ENCODE measurements at regions of chr16 and their contacts with region 1.

Region 1: GRCh38 chr16:10737068-10737625 is 6.5 kb upstream of the NUBP1 start:
- DNase-seq: peak in 2 of 3 donors; percentile 31 to 73
- ATAC-seq: peak; percentile 50 to 62
- H3K4me3 ChIP-seq: no peak overlapping the region
- H3K27ac ChIP-seq: peak overlapping the region; percentile 83
- H3K4me1 ChIP-seq: peaks cover 2% of the 10 kb centered on the region
- H3K27me3 ChIP-seq: no peaks in the 10 kb centered on the region

Region 2: GRCh38 chr16:10256784-10257641 is 480.1 kb before region 1 on chr16:
- intact Hi-C with region 1: loop called in 2 of 4 experiments (anchors 10 kb)
- DNase-seq: peak; percentile 26 to 62 (median 51)
- ATAC-seq: peak in 1 of 2 donors; percentile 77
- H3K4me3 ChIP-seq: no peak overlapping the region
- H3K27ac ChIP-seq: no peak overlapping the region
- H3K4me1 ChIP-seq: no peaks in the 10 kb centered on the region
- H3K27me3 ChIP-seq: no peaks in the 10 kb centered on the region

Region 3: DNA sequence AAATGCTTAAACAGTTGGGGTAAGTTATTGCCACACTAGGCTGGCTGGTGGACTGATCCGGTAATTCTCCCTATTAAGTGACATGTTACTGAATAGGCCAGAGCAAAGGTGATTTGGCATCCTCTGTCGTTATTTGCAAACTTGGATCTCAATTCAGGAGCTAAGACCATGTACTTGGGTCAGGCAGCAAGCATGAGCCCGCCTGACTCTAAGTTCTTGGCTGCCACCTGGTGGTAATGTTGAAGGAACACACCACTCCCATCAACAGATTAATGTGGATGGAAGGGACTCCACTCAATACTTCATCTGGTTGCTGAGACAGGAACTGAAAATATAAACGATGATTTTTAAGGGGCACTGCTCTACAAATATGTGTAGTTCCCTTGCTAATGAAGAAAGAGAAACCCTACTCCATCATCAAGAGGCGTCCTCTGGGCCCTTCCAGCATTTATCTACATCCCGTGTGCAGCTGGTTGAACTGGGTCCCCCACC is 227.6 kb before region 1 on chr16:
- intact Hi-C with region 1: loop called in 2 of 4 experiments (anchors 2 kb)
- DNase-seq: peak in 2 of 3 donors; percentile 28 to 58
- ATAC-seq: peak; percentile 89 to 90
- H3K4me3 ChIP-seq: no peak overlapping the region
- H3K27ac ChIP-seq: no peak overlapping the region
- H3K4me1 ChIP-seq: no peaks in the 10 kb centered on the region
- H3K27me3 ChIP-seq: no peaks in the 10 kb centered on the region

Region 4: GRCh38 chr16:10558746-10559641 is 178.2 kb before region 1 on chr16:
- intact Hi-C with region 1: no loop called
- DNase-seq: peak; percentile 87 to 93 (median 93)
- ATAC-seq: peak; percentile 88 to 89
- H3K4me3 ChIP-seq: peak overlapping the region; percentile 8
- H3K27ac ChIP-seq: peak overlapping the region; percentile 84
- H3K4me1 ChIP-seq: peaks cover 34% of the 10 kb centered on the region
- H3K27me3 ChIP-seq: no peaks in the 10 kb centered on the region

Region 5: DNA sequence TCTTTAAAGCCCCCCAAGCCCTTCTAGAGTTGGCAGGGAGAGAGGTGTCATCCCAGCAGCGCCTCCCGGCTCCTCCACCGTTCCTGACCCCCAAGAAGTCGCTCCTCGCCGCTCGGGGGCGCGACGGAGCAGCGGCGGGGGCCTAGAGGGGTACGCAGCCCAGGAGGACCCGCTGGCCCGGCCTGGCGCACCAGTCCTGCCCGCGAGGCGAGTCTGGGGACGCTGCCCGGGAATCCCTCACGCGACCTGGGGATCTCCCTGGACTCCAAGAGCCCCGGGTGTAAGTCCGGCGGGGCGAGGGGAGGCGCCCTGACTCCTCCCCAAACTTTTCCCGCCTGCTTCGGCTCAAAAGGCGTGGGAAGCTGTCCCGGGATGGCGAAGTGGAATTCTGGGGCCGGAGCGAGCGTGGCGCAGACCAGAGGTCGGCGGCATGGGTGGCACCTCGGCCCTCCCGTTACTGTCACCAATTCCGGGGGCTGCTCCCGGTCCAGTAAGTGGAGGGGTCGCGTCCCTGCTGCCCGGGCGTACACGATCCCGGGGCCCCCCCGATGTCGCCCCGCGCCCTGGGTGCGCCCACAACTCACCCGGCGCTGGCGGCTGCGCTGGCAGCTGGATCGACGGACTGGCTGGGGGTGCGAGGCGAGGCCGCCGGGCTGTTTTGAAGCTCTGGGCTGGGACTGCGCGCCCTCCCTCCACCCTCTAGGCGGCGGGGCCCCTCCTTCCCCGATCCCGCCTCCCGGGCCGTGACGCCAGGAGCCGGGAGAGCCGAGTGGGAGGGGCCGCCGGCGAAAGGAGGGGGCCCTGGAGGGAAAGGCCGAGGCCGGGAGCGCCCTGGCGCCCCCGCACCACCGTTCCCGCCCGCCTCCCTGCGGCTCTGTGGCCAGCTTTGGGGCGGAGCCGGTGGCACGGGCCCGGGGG is 156.9 kb before region 1 on chr16 and contains the start of gene EMP2:
- intact Hi-C with region 1: loop called in 2 of 4 experiments (anchors 5 kb)
- DNase-seq: peak; percentile 88 to 95 (median 94)
- ATAC-seq: peak; percentile 93 to 94
- H3K4me3 ChIP-seq: peak within 1 kb of the TSS; percentile 63
- H3K27ac ChIP-seq: peak within 1 kb of the TSS; percentile 85
- H3K4me1 ChIP-seq: peaks cover 15% of the 10 kb centered on the region
- H3K27me3 ChIP-seq: no peaks in the 10 kb centered on the region
- total RNA-seq, gene EMP2: 66.0 to 85.0 (median 74.3) TPM

Region 6: GRCh38 chr16:10668322-10669045 is 68.7 kb before region 1 on chr16:
- intact Hi-C with region 1: loop called in 1 of 4 experiments (anchors 10 kb)
- DNase-seq: peak in 2 of 3 donors; percentile 58 to 80
- ATAC-seq: peak; percentile 79 to 82
- H3K4me3 ChIP-seq: no peak overlapping the region
- H3K27ac ChIP-seq: no peak overlapping the region
- H3K4me1 ChIP-seq: peaks cover 2% of the 10 kb centered on the region
- H3K27me3 ChIP-seq: no peaks in the 10 kb centered on the region

Measured in right cardiac atrium (tissue), 5 donors.